Mammary epithelial cell (primary cell): ENCODE measurements at regions of chr5 and their contacts with region 1.

Region 1: DNA sequence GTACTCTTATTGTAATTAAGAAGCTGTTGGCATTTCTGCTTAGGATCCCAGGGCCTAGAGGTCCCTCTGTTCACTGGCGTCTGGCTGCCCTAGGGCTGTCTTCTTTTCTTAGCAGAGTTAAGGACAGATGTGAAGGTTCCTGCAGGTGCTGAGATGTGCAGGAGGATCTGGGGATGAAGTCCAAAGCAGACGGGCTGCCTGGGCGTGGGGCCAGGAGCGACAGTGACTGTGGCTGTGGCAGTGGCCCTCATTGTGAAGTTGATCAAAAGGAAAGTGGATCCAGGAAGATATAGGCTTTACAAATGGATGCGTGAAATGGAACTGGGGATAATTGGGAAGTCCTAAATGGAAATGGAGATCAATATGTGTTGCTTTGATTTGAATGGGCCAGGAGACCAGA is 19.1 kb upstream of the SH3PXD2B start:
- DNase-seq: no peak
- H3K4me3 ChIP-seq: no peak overlapping the region
- H3K27ac ChIP-seq: no peak overlapping the region
- H3K4me1 ChIP-seq: no peaks in the 10 kb centered on the region
- H3K27me3 ChIP-seq: peaks cover 2% of the 10 kb centered on the region
- CTCF ChIP-seq: no peak

Region 2: DNA sequence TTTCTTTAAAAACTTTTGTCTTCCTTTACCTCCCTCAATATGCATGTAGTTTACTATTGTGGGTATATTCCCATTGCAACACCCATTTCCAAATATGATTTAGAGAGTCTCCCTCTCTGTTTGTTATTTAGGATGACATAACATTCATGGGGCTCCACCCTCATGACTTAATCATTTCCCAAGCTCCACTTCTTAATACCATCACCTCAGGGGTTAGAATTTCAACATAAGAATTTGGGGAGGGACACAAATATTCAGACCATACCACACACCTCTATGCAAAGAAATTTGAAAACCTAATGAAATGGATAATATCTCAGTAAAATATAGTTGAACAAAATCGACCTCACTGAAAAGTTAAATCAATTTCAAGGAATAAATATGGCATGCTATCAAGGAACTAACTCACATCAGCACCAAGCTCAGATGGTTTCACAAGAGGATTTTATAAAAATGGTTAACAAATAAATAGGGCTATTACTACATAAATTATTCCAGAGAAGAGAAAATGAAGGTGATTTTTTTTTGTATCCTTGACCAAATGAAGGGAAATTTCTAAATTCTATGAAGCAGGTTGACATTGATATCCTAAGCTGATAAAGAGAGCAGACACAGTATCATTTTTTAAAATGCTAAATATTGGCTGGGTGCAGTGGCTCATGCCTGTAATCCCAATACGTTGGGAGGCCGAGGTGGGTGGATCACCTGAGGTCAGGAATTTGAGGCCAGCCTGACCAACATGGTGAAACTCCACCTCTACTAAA is 169.7 kb before region 1 on chr5:
- CTCF ChIA-PET with region 1: interaction called, 13 read pairs
- dilution Hi-C with region 1: no loop called
- in situ Hi-C with region 1: no loop called
- intact Hi-C with region 1: no loop called
- DNase-seq: peak; percentile 78
- H3K4me3 ChIP-seq: no peak overlapping the region
- H3K27ac ChIP-seq: peak overlapping the region; percentile 44
- H3K4me1 ChIP-seq: no peaks in the 10 kb centered on the region
- H3K27me3 ChIP-seq: no peaks in the 10 kb centered on the region
- CTCF ChIP-seq: no peak

Region 3: DNA sequence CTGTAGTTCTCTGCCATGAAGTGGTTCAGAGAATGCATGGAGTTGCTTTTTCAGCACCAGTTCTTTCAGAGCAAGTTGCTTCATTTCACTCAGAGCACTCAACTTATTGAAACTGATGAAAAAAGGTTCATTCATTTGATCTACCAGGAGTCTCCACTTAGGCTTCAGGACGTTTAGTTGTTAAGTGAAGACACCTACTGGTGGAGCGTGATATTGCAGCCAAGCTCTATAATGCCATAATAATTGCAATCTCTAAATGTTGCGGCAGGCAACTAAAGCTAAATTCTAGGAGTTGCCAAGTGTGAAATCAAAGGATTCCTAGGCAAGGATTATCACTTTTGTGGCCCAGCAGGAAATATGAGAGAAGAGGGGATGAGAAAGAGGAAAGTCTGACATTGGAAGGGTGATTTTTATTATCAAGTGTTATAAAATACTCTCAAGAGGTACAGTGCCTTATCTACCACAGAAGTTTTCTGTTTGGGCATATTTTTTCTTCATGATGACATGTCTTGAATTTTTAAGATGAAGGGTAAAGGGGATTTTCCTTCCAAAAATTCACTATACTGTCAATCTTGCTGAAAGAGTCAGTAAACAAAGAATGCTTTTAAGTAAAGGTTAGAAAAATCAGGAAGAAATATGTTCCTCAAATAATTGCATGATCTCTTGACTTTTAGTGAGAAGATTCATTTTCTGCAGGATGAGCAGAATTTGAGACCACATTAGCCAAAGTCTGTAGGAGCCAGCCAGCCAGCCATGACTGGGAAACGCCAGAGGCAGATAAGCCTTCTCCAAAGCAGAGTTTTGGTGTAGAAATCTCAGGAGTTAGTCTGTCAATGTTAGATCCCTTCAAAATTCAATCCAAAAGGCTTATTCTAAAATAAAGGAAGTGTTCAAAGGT is 102.5 kb before region 1 on chr5:
- CTCF ChIA-PET with region 1: no interaction called
- dilution Hi-C with region 1: no loop called
- in situ Hi-C with region 1: no loop called
- intact Hi-C with region 1: no loop called
- DNase-seq: peak; percentile 45
- H3K4me3 ChIP-seq: no peak overlapping the region
- H3K27ac ChIP-seq: no peak overlapping the region
- H3K4me1 ChIP-seq: peaks cover 4% of the 10 kb centered on the region
- H3K27me3 ChIP-seq: no peaks in the 10 kb centered on the region
- CTCF ChIP-seq: peak; percentile 66 to 91

Region 4: GRCh38 chr5:172740428-172741201 is 267.2 kb after region 1 on chr5:
- CTCF ChIA-PET with region 1: interaction called, 15 read pairs
- dilution Hi-C with region 1: no loop called
- in situ Hi-C with region 1: no loop called
- intact Hi-C with region 1: no loop called
- DNase-seq: peak; percentile 92
- H3K4me3 ChIP-seq: no peak overlapping the region
- H3K27ac ChIP-seq: peak overlapping the region; percentile 87
- H3K4me1 ChIP-seq: peaks cover 13% of the 10 kb centered on the region
- H3K27me3 ChIP-seq: no peaks in the 10 kb centered on the region
- CTCF ChIP-seq: no peak